IMR-90 (cell line): ENCODE measurements at regions of chr6 and their contacts with region 1.

Region 1: GRCh38 chr6:127641905-127642304 is 64.9 kb downstream of the C6orf58 start:
- DNase-seq: peak; percentile 36
- ATAC-seq: peak; percentile 89
- H3K4me3 ChIP-seq: no peak overlapping the region
- H3K27ac ChIP-seq: no peak overlapping the region
- H3K4me1 ChIP-seq: no peaks in the 10 kb centered on the region
- H3K27me3 ChIP-seq: peaks cover 3% of the 10 kb centered on the region; the same call in 1 of the 2 replicates
- CTCF ChIP-seq: peak; percentile 66
- POLR2A ChIP-seq: no peak
- RAD21 ChIP-seq: peak; percentile 63

Region 2: GRCh38 chr6:127464881-127465459 is 176.9 kb before region 1 on chr6:
- CTCF ChIA-PET with region 1: interaction called, 3 read pairs
- POLR2A ChIA-PET with region 1: no interaction called
- dilution Hi-C with region 1: no loop called
- in situ Hi-C with region 1: no loop called
- intact Hi-C with region 1: loop called (anchors 5 kb)
- DNase-seq: peak; percentile 78
- ATAC-seq: peak; percentile 88
- H3K4me3 ChIP-seq: no peak overlapping the region
- H3K27ac ChIP-seq: no peak overlapping the region
- H3K4me1 ChIP-seq: peaks cover 4% of the 10 kb centered on the region; the same call in 1 of the 2 replicates
- H3K27me3 ChIP-seq: no peaks in the 10 kb centered on the region
- CTCF ChIP-seq: peak; percentile 88
- POLR2A ChIP-seq: no peak
- RAD21 ChIP-seq: peak; percentile 79

Region 3: GRCh38 chr6:127554435-127555006 is 87.4 kb before region 1 on chr6:
- CTCF ChIA-PET with region 1: no interaction called
- POLR2A ChIA-PET with region 1: no interaction called
- dilution Hi-C with region 1: no loop called
- in situ Hi-C with region 1: loop called (anchors 10 kb)
- intact Hi-C with region 1: loop called (anchors 1 kb)
- DNase-seq: peak; percentile 27
- ATAC-seq: peak; percentile 73
- H3K4me3 ChIP-seq: no peak overlapping the region
- H3K27ac ChIP-seq: no peak overlapping the region
- H3K4me1 ChIP-seq: no peaks in the 10 kb centered on the region
- H3K27me3 ChIP-seq: no peaks in the 10 kb centered on the region; the same call in 1 of the 2 replicates
- CTCF ChIP-seq: peak; percentile 37
- POLR2A ChIP-seq: no peak
- RAD21 ChIP-seq: peak; percentile 60